IMR-90 (cell line): ENCODE measurements at regions of chr18 and their contacts with region 1.

Region 1: DNA sequence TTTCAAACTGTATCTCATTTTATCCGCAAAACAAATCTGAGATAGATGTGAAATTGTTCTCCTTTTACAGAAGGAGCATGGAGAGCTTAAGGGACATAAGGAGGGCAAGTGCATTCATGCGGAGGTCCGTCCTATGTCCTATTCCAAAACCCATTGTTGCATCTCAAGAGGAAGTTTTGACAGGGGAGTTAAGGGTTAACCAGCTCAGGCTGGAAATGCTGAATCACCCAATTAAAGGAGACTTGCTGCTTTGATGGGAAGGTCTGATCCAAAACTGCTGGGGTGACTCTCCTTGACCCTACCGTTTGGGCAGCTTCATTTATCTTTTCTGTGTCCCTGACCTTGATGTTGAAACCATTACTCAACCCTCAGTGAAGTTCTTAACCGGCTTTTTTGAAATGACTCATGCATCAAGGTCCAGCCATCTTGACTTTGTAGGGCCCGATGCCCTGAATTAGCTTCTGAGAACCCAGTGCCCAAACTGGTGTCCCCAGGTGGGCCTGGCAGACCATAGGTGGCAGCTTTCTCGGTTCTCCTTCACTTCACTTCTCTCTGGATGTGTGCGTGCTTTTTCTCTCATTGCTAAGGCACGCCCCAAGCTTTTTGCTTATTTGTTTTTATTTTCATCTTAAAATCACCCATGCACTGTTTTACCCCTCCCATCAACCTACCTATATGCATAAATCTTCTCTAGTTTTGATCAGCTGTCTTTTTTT is 15.9 kb upstream of the TXNDC2 start:
- DNase-seq: peak; percentile 64
- ATAC-seq: peak; percentile 64
- H3K4me3 ChIP-seq: no peak overlapping the region
- H3K27ac ChIP-seq: peak overlapping the region; percentile 69; the same call in 1 of the 2 replicates
- H3K4me1 ChIP-seq: peaks cover 15% of the 10 kb centered on the region
- H3K27me3 ChIP-seq: no peaks in the 10 kb centered on the region
- CTCF ChIP-seq: no peak
- POLR2A ChIP-seq: no peak
- RAD21 ChIP-seq: no peak

Region 2: GRCh38 chr18:9594823-9595596 is 274.9 kb before region 1 on chr18:
- CTCF ChIA-PET with region 1: no interaction called
- POLR2A ChIA-PET with region 1: no interaction called
- dilution Hi-C with region 1: no loop called
- in situ Hi-C with region 1: no loop called
- intact Hi-C with region 1: no loop called
- DNase-seq: peak; percentile 58
- ATAC-seq: peak; percentile 85
- H3K4me3 ChIP-seq: peak overlapping the region; percentile 32; the same call in 1 of the 2 replicates
- H3K27ac ChIP-seq: peak overlapping the region; percentile 33; the same call in 1 of the 2 replicates
- H3K4me1 ChIP-seq: peaks cover 7% of the 10 kb centered on the region
- H3K27me3 ChIP-seq: no peaks in the 10 kb centered on the region
- CTCF ChIP-seq: no peak
- POLR2A ChIP-seq: no peak
- RAD21 ChIP-seq: no peak

Region 3: GRCh38 chr18:9933865-9934264 is 64.0 kb after region 1 on chr18:
- CTCF ChIA-PET with region 1: no interaction called
- POLR2A ChIA-PET with region 1: no interaction called
- dilution Hi-C with region 1: no loop called
- in situ Hi-C with region 1: no loop called
- intact Hi-C with region 1: loop called (anchors 10 kb)
- DNase-seq: no peak
- ATAC-seq: no peak
- H3K4me3 ChIP-seq: no peak overlapping the region
- H3K27ac ChIP-seq: no peak overlapping the region
- H3K4me1 ChIP-seq: 0 out of 2 replicates have a peak, but pooled peaks cover 2% of the 10 kb centered on the region
- H3K27me3 ChIP-seq: no peaks in the 10 kb centered on the region
- CTCF ChIP-seq: no peak
- POLR2A ChIP-seq: no peak
- RAD21 ChIP-seq: no peak